ENCODE measurements at regions of chr3 and their contacts with region 1.

Region 1: DNA sequence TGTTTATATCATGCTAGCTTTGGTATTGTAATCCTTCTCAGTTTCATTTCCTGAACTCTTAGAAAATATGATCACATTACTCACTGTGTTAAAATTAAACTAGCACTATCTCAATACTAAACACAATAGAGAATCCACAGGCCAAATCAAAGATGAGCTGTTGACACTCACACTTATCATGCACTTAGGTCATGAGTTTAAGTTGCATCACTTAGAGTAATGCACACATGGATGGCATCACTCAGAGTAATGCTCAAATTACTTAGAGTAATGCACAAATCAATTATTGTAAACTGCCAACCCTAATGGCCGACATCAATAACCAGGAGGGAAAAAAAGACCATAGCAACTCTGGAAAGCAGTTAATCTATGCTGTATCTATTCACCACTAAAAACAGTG is 40.0 kb upstream of the MCF2L2 start:
- DNase-seq: no peak
- ATAC-seq: no peak

Region 2: GRCh38 chr3:182325213-182325941 is 1143.0 kb before region 1 on chr3:
- intact Hi-C with region 1: no loop called
- DNase-seq: no peak
- ATAC-seq: no peak

Region 3: DNA sequence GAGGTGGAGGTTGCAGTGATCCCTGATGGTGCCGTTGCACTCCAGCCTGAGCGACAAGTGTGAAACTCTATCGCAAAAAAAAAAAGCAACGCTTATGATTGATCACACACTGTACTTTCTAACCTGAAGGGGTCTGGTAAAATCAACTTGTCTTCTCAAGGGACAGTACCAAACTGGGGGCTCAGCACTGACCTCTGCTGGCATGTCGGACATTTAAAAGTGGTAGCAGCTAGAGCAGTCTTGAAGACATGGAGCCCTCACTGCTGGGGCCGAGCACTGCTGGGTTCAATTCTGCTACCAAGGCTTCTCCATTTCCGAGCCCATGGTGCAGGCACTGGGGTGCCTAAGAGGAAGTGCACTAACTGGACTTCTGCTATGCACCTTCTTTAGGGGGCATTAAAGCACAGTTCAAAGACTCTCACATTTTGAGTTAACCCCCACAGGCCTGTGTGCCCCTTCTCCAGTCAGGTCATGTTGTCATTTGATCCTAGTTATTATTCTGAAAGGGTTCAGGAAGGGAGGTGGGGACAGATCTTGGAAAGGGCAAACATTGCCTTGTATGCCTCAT is 279.4 kb before region 1 on chr3:
- intact Hi-C with region 1: no loop called
- DNase-seq: peak; percentile 50
- ATAC-seq: no peak

Region 4: GRCh38 chr3:183766745-183767606 is 298.6 kb after region 1 on chr3:
- intact Hi-C with region 1: loop called (anchors 2 kb)
- DNase-seq: peak; percentile 59
- ATAC-seq: peak; percentile 91

Region 5: GRCh38 chr3:183812761-183813445 is 344.5 kb after region 1 on chr3:
- intact Hi-C with region 1: no loop called
- DNase-seq: no peak
- ATAC-seq: peak; percentile 23

Region 6: GRCh38 chr3:183884427-183885296 is 416.2 kb after region 1 on chr3 and contains the start of gene PARL:
- intact Hi-C with region 1: no loop called
- DNase-seq: peak; percentile 98
- ATAC-seq: peak; percentile 100
- total RNA-seq, gene PARL: 57.2 TPM

Measured in Right ventricle myocardium superior (tissue), 1 donor.